ENCODE measurements at regions of chr19 and their contacts with region 1.

Region 1: DNA sequence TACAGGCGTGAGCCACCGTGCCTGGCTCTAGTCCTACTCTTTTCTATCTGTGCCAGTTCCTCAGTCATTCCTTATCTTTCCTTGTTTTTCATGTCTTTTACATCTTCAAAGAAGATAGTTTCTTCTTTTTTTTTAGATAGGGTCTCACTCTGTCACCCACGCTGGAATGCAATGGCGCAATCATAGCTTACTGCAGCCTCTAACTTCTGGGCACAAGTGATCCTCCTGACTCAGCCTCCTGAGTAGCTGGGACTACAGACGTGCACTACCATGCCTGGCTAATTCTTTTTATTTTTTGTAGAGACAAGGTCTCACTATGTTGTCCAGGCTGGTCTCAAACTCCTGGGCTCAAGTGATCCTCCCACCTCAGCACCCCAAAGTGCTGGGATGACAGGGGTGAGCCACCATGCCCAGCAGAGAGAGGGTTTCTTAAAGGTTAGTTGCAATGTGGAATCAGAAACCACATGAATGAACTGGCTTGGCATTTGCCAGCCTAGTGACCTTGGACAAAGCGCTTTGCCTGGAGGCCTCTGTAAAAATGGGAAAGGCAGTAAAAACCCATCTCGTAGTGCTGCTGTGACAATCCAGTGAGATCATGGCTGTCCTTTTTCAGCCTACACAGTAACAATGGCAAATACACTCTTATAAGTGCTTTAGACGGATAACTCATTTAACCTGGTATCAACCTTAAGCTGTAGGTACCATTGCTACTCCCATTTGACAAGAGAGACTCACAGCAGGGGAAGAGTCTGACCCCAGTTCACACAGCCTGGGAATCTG is 3.9 kb downstream of the ACP7 start:
- DNase-seq: no peak
- H3K4me3 ChIP-seq: no peak overlapping the region
- H3K27ac ChIP-seq: peak overlapping the region in 2 of 59 donors; percentile 31 to 34
- H3K27me3 ChIP-seq: peaks cover 0 to 36% (median 16%) of the 10 kb centered on the region in 45 donors
- CTCF ChIP-seq: no peak

Region 2: GRCh38 chr19:38812841-38813320 is 275.2 kb before region 1 on chr19 and contains the start of gene LGALS4:
- intact Hi-C with region 1: no loop called
- DNase-seq: no peak
- H3K4me3 ChIP-seq: no peak within 1 kb of the TSS
- H3K27ac ChIP-seq: no peak within 1 kb of the TSS
- H3K27me3 ChIP-seq: no peaks in the 10 kb centered on the region
- CTCF ChIP-seq: no peak
- total RNA-seq, gene LGALS4: 0.39 to 4.0 (median 1.4) TPM in 109 of 120 experiments, not detected in the others

Region 3: GRCh38 chr19:38970664-38971532 is 117.2 kb before region 1 on chr19:
- intact Hi-C with region 1: no loop called
- DNase-seq: peak in 7 of 10 donors; percentile 16 to 78 (median 56)
- H3K4me3 ChIP-seq: no peak overlapping the region
- H3K27ac ChIP-seq: peak overlapping the region in 45 of 59 donors; percentile 0 to 77 (median 46)
- H3K27me3 ChIP-seq: no peaks in the 10 kb centered on the region
- CTCF ChIP-seq: no peak

Region 4: GRCh38 chr19:39104186-39104596 is 16.1 kb after region 1 on chr19:
- intact Hi-C with region 1: loop called in 1 of 2 experiments (anchors 2 kb)
- DNase-seq: peak in 5 of 10 donors; percentile 41 to 87 (median 43)
- H3K4me3 ChIP-seq: no peak overlapping the region
- H3K27ac ChIP-seq: peak overlapping the region in 58 of 59 donors; percentile 32 to 94 (median 87)
- H3K27me3 ChIP-seq: peaks cover 0 to 9% (median 0%) of the 10 kb centered on the region in 45 donors
- CTCF ChIP-seq: peak in 3 of 56 donors; percentile 9 to 27 (median 13)

Measured in dorsolateral prefrontal cortex (tissue), 120 donors.